ENCODE measurements at regions of chr10 and their contacts with region 1.

Region 1: GRCh38 chr10:21495752-21496342 is 29.6 kb downstream of the SKIDA1 start:
- DNase-seq: peak; percentile 86
- H3K4me3 Mint-ChIP-seq: peak overlapping the region; percentile 77
- H3K27ac Mint-ChIP-seq: no peak overlapping the region
- H3K4me1 Mint-ChIP-seq: peaks cover 27% of the 10 kb centered on the region
- H3K27me3 Mint-ChIP-seq: peaks cover 88% of the 10 kb centered on the region

Region 2: DNA sequence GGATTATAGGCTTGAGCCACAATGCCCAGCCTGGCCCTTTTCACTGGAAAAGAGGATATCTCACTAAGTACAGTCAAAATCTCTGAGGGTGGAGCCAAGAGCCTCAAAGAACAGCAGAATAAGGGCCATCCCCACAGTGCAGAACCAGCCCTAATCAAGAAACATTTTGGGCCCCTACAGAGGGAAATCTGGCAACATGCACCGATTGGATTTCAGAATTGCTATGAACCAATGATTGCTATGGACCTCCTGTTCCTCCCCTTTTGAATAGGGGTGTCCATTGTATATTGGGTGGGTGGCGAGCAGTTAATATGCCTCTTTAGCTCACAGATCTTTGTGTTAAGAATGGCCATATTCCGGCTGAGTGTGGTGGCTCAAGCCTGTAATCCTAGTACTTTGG is 13.0 kb before region 1 on chr10:
- CTCF ChIA-PET with region 1: no interaction called
- DNase-seq: no peak
- H3K4me3 Mint-ChIP-seq: no peak overlapping the region
- H3K27ac Mint-ChIP-seq: no peak overlapping the region
- H3K4me1 Mint-ChIP-seq: no peaks in the 10 kb centered on the region
- H3K27me3 Mint-ChIP-seq: peaks cover 11% of the 10 kb centered on the region

Region 3: GRCh38 chr10:21517134-21518031 is 21.5 kb after region 1 on chr10:
- CTCF ChIA-PET with region 1: interaction called, 25 read pairs
- DNase-seq: peak; percentile 49
- H3K4me3 Mint-ChIP-seq: peak overlapping the region; percentile 79
- H3K27ac Mint-ChIP-seq: no peak overlapping the region
- H3K4me1 Mint-ChIP-seq: peaks cover 44% of the 10 kb centered on the region
- H3K27me3 Mint-ChIP-seq: peaks cover 85% of the 10 kb centered on the region

Region 4: DNA sequence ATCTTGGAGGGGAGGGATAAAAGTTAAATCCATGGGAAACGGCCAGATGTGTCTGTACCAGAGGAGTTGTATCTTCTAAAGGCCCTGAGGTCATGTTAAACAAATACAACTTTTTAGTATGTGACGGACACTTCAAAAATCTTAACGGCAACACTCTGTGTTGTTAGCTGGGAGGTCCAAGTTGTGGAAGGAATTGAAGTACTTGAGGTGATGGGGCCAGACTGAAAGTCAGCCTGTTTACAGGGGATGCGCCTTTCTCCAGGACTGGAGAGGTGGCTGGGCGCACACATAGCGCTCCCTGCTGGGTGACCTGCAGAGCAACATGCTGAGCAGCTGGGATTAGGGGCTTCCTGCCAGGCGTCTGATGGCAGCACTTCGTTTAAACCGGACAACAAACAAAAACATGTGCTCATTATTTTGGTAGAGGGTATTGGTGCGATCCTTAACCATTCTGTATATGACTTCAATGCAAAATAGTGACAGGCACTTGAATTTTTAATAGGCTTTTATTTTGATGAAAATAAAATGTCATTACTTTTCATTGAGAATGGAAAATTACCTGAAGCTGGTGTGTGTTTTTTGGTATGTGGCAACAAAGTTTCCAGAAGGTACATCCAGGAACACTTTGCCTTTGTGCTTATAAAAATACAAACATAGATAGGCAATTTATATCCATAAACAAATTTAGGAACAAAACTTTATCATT is 236.4 kb after region 1 on chr10:
- CTCF ChIA-PET with region 1: interaction called, 52 read pairs
- DNase-seq: peak; percentile 60
- H3K4me3 Mint-ChIP-seq: no peak overlapping the region
- H3K27ac Mint-ChIP-seq: no peak overlapping the region
- H3K4me1 Mint-ChIP-seq: peaks cover 38% of the 10 kb centered on the region
- H3K27me3 Mint-ChIP-seq: no peaks in the 10 kb centered on the region

Measured in activated naive CD4-positive, alpha-beta T cell treated with anti-CD3 and anti-CD28 coated beads, Interleukin-2, amount 10 ng/mL, durations not matched to agents 7 days and 5 days (primary cell).